CD4-positive, alpha-beta memory T cell (primary cell): ENCODE measurements at regions of chr19 and their contacts with region 1.

Region 1: GRCh38 chr19:19627621-19628500 is at the start of gene LPAR2:
- DNase-seq: peak; percentile 80 to 87 (median 84)
- H3K4me3 ChIP-seq: peak within 1 kb of the TSS; percentile 68 to 73
- H3K4me3 Mint-ChIP-seq: peak within 1 kb of the TSS; percentile 92 to 99 (median 93)
- H3K27ac ChIP-seq: peak within 1 kb of the TSS; percentile 80
- H3K27ac Mint-ChIP-seq: peak within 1 kb of the TSS; percentile 92 to 98 (median 95)
- H3K4me1 ChIP-seq: peaks cover 22% of the 10 kb centered on the region
- H3K4me1 Mint-ChIP-seq: peaks cover 14 to 36% (median 28%) of the 10 kb centered on the region in 4 donors
- H3K27me3 ChIP-seq: no peaks in the 10 kb centered on the region
- H3K27me3 Mint-ChIP-seq: no peaks in the 10 kb centered on the region
- total RNA-seq, gene LPAR2: 70.7 to 72.4 TPM

Region 2: GRCh38 chr19:19597809-19598306 is 30.0 kb before region 1 on chr19:
- CTCF ChIA-PET with region 1: interaction called, 3 read pairs
- POLR2A ChIA-PET with region 1: interaction called, 75 read pairs
- intact Hi-C with region 1: loop called (anchors 5 kb)
- DNase-seq: peak; percentile 85 to 93 (median 91)
- H3K4me3 ChIP-seq: no peak overlapping the region
- H3K4me3 Mint-ChIP-seq: peak overlapping the region; percentile 47 to 84 (median 79)
- H3K27ac ChIP-seq: peak overlapping the region; percentile 89
- H3K27ac Mint-ChIP-seq: peak overlapping the region; percentile 93 to 100 (median 98)
- H3K4me1 ChIP-seq: peaks cover 83% of the 10 kb centered on the region
- H3K4me1 Mint-ChIP-seq: peaks cover 48 to 84% (median 62%) of the 10 kb centered on the region in 4 donors
- H3K27me3 ChIP-seq: no peaks in the 10 kb centered on the region
- H3K27me3 Mint-ChIP-seq: no peaks in the 10 kb centered on the region

Region 3: DNA sequence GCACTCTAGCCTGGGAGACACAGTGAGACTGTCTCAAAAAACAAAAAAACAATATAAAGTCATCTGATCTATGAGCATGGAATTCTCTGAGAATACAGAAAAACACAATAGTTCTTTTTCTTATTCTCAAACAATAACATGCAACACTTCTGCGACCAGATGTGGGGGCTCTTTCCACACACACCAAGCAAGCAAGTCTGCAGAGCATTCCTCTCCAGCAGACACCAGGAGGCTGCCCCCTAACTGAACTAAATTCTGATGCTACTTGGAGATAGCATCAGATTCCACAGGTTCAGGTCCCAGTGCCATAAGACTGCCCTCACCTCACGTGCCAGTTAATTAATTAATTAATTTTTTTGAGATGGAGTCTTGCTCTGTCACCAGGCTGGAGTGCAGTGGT is 68.5 kb after region 1 on chr19:
- CTCF ChIA-PET with region 1: no interaction called
- POLR2A ChIA-PET with region 1: no interaction called
- intact Hi-C with region 1: no loop called
- DNase-seq: no peak
- H3K4me3 ChIP-seq: no peak overlapping the region
- H3K4me3 Mint-ChIP-seq: no peak overlapping the region
- H3K27ac ChIP-seq: no peak overlapping the region
- H3K27ac Mint-ChIP-seq: no peak overlapping the region
- H3K4me1 ChIP-seq: no peaks in the 10 kb centered on the region
- H3K4me1 Mint-ChIP-seq: peaks cover 0 to 2% (median 0%) of the 10 kb centered on the region in 4 donors
- H3K27me3 ChIP-seq: no peaks in the 10 kb centered on the region
- H3K27me3 Mint-ChIP-seq: no peaks in the 10 kb centered on the region

Region 4: GRCh38 chr19:19900729-19901444 is 273.0 kb after region 1 on chr19 and contains the start of gene ZNF93:
- CTCF ChIA-PET with region 1: no interaction called
- POLR2A ChIA-PET with region 1: no interaction called
- intact Hi-C with region 1: no loop called
- DNase-seq: peak; percentile 90 to 96 (median 92)
- H3K4me3 ChIP-seq: peak within 1 kb of the TSS; percentile 79 to 82
- H3K4me3 Mint-ChIP-seq: peak within 1 kb of the TSS; percentile 96 to 99 (median 98)
- H3K27ac ChIP-seq: peak within 1 kb of the TSS; percentile 66
- H3K27ac Mint-ChIP-seq: peak within 1 kb of the TSS; percentile 80 to 97 (median 93)
- H3K4me1 ChIP-seq: peaks cover 15% of the 10 kb centered on the region
- H3K4me1 Mint-ChIP-seq: peaks cover 12 to 34% (median 24%) of the 10 kb centered on the region in 4 donors
- H3K27me3 ChIP-seq: no peaks in the 10 kb centered on the region
- H3K27me3 Mint-ChIP-seq: no peaks in the 10 kb centered on the region
- total RNA-seq, gene ZNF93: 8.8 to 9.2 TPM